ENCODE measurements at regions of chr1 and their contacts with region 1.

Region 1: GRCh38 chr1:23889074-23889473 is 21.0 kb upstream of the FUCA1 start:
- DNase-seq: peak; percentile 78
- ATAC-seq: peak; percentile 62
- H3K4me3 ChIP-seq: peak overlapping the region in 1 of 5 experiments; percentile 60
- H3K4me3 Mint-ChIP-seq: peak overlapping the region; percentile 81
- H3K27ac ChIP-seq: peak overlapping the region; percentile 70 to 82
- H3K27ac Mint-ChIP-seq: peak overlapping the region; percentile 88
- H3K4me1 ChIP-seq: peaks cover 68 to 74% of the 10 kb centered on the region in 2 donors
- H3K4me1 Mint-ChIP-seq: peaks cover 72% of the 10 kb centered on the region
- H3K27me3 ChIP-seq: no peaks in the 10 kb centered on the region
- H3K27me3 Mint-ChIP-seq: no peaks in the 10 kb centered on the region
- CTCF ChIP-seq: no peak

Region 2: DNA sequence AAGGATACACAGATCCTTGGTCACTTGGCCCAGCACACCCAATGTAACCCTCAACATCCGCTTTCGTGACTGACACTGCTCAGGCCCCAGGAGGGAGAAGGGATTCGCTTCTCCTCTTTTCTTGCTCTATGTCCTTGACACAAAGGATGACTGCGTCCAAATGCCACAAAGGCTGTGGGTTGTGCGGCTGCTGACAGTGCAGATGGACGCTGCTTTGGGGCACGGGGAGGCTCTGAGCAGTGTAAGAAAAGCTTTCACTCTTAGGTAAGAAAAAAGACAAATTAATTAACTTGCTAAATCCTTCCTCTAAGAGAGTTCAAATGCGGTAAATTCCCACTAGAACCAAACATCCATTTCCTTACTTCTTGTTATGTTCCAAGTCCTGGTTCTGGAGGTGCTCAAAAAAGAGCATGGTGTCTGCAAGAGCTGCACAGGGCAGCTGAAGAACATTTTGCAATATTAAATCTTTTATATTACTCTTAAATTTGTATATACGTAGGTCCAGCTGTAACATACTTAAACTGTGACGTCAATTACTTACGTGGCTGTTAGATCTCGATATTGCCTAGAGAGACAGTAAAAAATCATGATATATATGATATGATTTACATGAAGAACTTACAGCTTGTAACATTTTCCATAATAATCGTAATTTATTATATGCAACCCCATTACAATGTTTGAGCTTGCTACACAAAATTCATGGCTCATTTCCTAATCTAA is 1197.9 kb before region 1 on chr1:
- CTCF ChIA-PET with region 1: no interaction called
- POLR2A ChIA-PET with region 1: no interaction called
- intact Hi-C with region 1: no loop called
- DNase-seq: no peak
- ATAC-seq: no peak
- H3K4me3 ChIP-seq: no peak overlapping the region
- H3K4me3 Mint-ChIP-seq: no peak overlapping the region
- H3K27ac ChIP-seq: no peak overlapping the region
- H3K27ac Mint-ChIP-seq: no peak overlapping the region
- H3K4me1 ChIP-seq: no peaks in the 10 kb centered on the region
- H3K4me1 Mint-ChIP-seq: no peaks in the 10 kb centered on the region
- H3K27me3 ChIP-seq: peaks cover 0 to 3% (median 0%) of the 10 kb centered on the region in 4 experiments
- H3K27me3 Mint-ChIP-seq: peaks cover 13% of the 10 kb centered on the region
- CTCF ChIP-seq: no peak

Region 3: GRCh38 chr1:23902321-23903278 is 13.5 kb after region 1 on chr1:
- CTCF ChIA-PET with region 1: interaction called, 10 read pairs
- POLR2A ChIA-PET with region 1: interaction called, 81 read pairs
- intact Hi-C with region 1: no loop called
- DNase-seq: no peak
- ATAC-seq: peak; percentile 26
- H3K4me3 ChIP-seq: peak overlapping the region in 2 of 5 experiments; percentile 22 to 27
- H3K4me3 Mint-ChIP-seq: peak overlapping the region; percentile 61
- H3K27ac ChIP-seq: peak overlapping the region in 1 of 2 donors; percentile 43
- H3K27ac Mint-ChIP-seq: peak overlapping the region; percentile 73
- H3K4me1 ChIP-seq: peaks cover 77 to 86% of the 10 kb centered on the region in 2 donors
- H3K4me1 Mint-ChIP-seq: peaks cover 74% of the 10 kb centered on the region
- H3K27me3 ChIP-seq: no peaks in the 10 kb centered on the region
- H3K27me3 Mint-ChIP-seq: no peaks in the 10 kb centered on the region
- CTCF ChIP-seq: no peak

Region 4: GRCh38 chr1:23908493-23909341 is 19.6 kb after region 1 on chr1:
- CTCF ChIA-PET with region 1: interaction called, 10 read pairs
- POLR2A ChIA-PET with region 1: interaction called, 81 read pairs
- intact Hi-C with region 1: loop called (anchors 2 kb)
- DNase-seq: peak; percentile 80
- ATAC-seq: peak; percentile 58
- H3K4me3 ChIP-seq: peak overlapping the region; percentile 53 to 94 (median 77)
- H3K4me3 Mint-ChIP-seq: peak overlapping the region; percentile 99
- H3K27ac ChIP-seq: peak overlapping the region; percentile 83 to 93
- H3K27ac Mint-ChIP-seq: peak overlapping the region; percentile 99
- H3K4me1 ChIP-seq: peaks cover 77 to 91% of the 10 kb centered on the region in 2 donors
- H3K4me1 Mint-ChIP-seq: peaks cover 86% of the 10 kb centered on the region
- H3K27me3 ChIP-seq: no peaks in the 10 kb centered on the region
- H3K27me3 Mint-ChIP-seq: no peaks in the 10 kb centered on the region
- CTCF ChIP-seq: no peak